ENCODE measurements at regions of chr2 and their contacts with region 1.

Region 1: GRCh38 chr2:8681786-8682692 is at the start of gene ID2:
- DNase-seq: peak; percentile 100
- ATAC-seq: peak; percentile 76
- H3K4me3 ChIP-seq: peak within 1 kb of the TSS; percentile 52
- H3K4me1 ChIP-seq: peaks cover 13% of the 10 kb centered on the region
- CTCF ChIP-seq: no peak
- total RNA-seq, gene ID2: 97.4 to 190 (median 170) TPM

Region 2: GRCh38 chr2:7427293-7428060 is 1254.6 kb before region 1 on chr2:
- intact Hi-C with region 1: loop called (anchors 2 to 10 kb)
- DNase-seq: peak in 1 of 3 donors; percentile 46
- ATAC-seq: peak; percentile 59
- H3K4me3 ChIP-seq: no peak overlapping the region
- H3K4me1 ChIP-seq: no peaks in the 10 kb centered on the region
- CTCF ChIP-seq: peak; percentile 28

Region 3: GRCh38 chr2:7736646-7737305 is 945.3 kb before region 1 on chr2:
- intact Hi-C with region 1: loop called in 1 of 2 experiments (anchors 10 kb)
- DNase-seq: no peak
- ATAC-seq: no peak
- H3K4me3 ChIP-seq: no peak overlapping the region
- H3K4me1 ChIP-seq: no peaks in the 10 kb centered on the region
- CTCF ChIP-seq: no peak

Region 4: DNA sequence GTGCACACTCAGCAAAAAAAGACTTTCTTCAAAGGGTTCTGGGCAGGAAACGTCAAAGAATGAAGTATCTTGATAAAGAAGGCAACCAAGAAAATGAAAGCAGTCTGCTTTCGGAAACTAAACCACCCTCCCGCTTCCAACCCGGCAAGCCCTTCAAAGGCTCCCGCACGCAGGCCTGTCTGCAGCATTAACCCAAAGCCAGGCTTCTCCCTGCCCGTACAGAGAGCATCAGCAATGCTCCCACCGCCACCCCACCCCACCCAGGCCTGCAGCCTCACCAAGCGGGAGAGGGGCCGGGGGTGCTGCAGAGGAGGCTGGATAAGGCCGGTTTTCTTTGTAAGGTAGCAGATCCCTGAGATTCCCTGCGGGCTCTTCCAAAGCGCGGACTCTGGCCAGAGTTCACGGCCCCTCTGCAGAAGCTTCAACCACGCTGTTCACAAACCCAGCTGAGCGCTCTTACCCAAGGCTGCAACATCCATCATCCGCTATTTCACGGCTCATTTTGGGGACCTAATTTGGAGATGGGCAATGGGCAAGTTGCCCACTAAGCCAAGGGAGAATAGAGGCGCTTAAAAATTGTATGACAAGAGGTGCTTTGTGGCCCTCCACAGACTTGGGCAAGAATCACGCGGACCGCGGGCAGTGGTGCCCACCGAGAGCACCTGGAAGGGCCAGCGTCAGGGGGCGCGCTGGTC is 225.7 kb before region 1 on chr2:
- intact Hi-C with region 1: no loop called
- DNase-seq: peak in 2 of 3 donors; percentile 52 to 56
- ATAC-seq: no peak
- H3K4me3 ChIP-seq: no peak overlapping the region
- H3K4me1 ChIP-seq: peaks cover 26% of the 10 kb centered on the region
- CTCF ChIP-seq: no peak

Region 5: GRCh38 chr2:8628230-8629209 is 53.5 kb before region 1 on chr2:
- intact Hi-C with region 1: loop called in 1 of 2 experiments (anchors 5 kb)
- DNase-seq: peak in 2 of 3 donors; percentile 45 to 65
- ATAC-seq: peak; percentile 42
- H3K4me3 ChIP-seq: no peak overlapping the region
- H3K4me1 ChIP-seq: peaks cover 22% of the 10 kb centered on the region
- CTCF ChIP-seq: no peak